ENCODE measurements at regions of chr1 and their contacts with region 1.

Region 1: DNA sequence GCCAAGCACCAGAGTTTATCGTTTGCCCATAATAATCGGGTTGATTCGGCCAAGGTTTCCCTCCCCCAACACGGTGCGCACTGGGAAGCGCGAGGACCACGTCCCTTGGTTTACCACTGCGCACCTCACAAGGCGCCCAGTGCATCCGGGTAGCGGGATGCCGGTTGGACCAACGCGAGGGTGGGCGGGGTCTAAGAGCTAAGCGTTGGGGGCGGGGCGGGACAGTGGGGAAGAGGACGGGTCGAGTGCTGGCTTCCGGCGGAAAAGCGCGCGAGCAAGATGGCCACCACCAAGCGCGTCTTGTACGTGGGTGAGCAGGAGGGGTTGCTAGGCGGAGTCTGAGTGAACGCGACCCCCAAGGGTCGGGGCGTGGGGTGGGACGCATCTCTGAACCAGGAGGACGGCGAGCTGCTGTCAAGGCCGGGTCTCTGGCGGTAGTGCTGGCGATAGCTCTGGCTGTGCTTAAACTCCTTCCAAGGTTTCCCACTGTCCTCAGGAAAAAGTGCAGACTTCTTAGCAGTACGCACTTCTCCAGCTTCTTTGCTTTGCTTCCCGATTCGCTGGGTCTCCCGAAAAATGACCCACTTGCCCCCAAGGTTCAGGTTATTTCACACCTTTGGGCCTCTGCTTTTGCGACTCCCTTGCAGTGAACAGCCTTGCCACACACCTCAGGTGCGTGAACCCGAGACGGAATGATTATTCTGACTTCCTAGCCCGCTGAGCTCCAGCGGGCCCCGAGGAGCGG is at the start of gene PPIE:
- DNase-seq: peak; percentile 82 to 89 (median 86)
- H3K4me3 ChIP-seq: peak within 1 kb of the TSS; percentile 56 to 98 (median 89)
- H3K4me3 Mint-ChIP-seq: peak within 1 kb of the TSS; percentile 95 to 98
- H3K27ac ChIP-seq: peak within 1 kb of the TSS; percentile 47 to 87
- H3K27ac Mint-ChIP-seq: peak within 1 kb of the TSS; percentile 85 to 95 (median 91)
- H3K4me1 ChIP-seq: peaks cover 11 to 15% of the 10 kb centered on the region in 2 donors
- H3K4me1 Mint-ChIP-seq: peaks cover 13% of the 10 kb centered on the region
- H3K27me3 ChIP-seq: peaks cover 0 to 7% of the 10 kb centered on the region in 2 donors
- H3K27me3 Mint-ChIP-seq: peaks cover 10 to 19% (median 16%) of the 10 kb centered on the region in 3 donors
- CTCF ChIP-seq: no peak
- polyA plus RNA-seq, gene PPIE: 48.8 to 55.9 (median 48.9) TPM

Region 2: DNA sequence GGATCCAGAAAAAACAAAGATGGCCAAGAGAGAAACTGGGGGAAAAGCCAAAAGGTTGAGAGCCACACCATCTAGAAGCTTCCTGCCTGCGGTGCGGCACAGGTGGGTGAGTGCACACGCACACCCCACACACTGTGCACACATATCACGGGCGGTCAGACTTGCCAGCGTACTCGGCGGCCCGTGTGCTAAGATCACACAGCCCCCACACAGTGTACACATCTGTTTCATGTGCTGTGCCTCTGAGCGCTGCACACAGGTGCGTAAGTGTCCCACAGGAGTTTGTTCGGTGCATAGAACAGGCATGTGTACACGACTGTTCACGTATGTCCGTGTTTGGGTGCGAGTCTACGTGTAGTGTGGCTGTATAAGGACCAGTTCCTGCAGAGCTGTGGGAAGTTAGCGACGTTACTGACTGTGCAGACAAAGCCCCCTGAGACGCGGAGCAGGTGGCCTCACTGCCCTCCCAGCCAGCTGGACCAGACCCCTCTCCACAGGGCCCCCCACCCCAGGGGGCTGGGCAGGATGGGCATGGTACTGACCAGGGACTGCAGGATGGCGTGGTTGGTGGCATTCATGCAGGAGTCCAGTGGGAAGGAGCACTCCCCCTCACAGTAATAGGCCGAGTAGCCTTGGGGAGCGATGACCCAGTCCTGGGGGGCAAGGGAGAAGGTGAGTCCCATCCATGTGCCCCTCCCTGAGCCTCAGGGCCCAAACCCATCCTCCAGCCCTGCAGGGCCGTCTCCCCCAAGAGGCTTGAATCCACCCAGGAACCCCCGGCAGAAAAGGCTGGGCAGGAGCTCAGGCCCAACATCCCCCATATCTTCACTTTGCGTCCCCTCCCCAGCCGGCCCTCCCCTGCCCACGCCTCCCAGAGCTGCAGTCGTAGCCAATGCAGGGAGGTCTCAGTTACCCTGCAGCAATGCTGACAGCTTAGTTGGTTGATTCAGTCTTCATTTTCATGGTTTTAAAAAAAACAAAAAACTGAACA is 24.1 kb after region 1 on chr1:
- intact Hi-C with region 1: no loop called
- DNase-seq: no peak
- H3K4me3 ChIP-seq: no peak overlapping the region
- H3K4me3 Mint-ChIP-seq: no peak overlapping the region
- H3K27ac ChIP-seq: no peak overlapping the region
- H3K27ac Mint-ChIP-seq: peak overlapping the region in 1 of 7 donors; percentile 64
- H3K4me1 ChIP-seq: no peaks in the 10 kb centered on the region
- H3K4me1 Mint-ChIP-seq: no peaks in the 10 kb centered on the region
- H3K27me3 ChIP-seq: no peaks in the 10 kb centered on the region
- H3K27me3 Mint-ChIP-seq: peaks cover 0 to 2% (median 0%) of the 10 kb centered on the region in 3 donors
- CTCF ChIP-seq: no peak

Region 3: GRCh38 chr1:39788758-39789570 is 50.2 kb after region 1 on chr1 and contains the start of gene BMP8B:
- intact Hi-C with region 1: loop called in 1 of 2 experiments (anchors 10 kb)
- DNase-seq: peak; percentile 53 to 67 (median 64)
- H3K4me3 ChIP-seq: peak within 1 kb of the TSS; percentile 59 to 80 (median 73)
- H3K4me3 Mint-ChIP-seq: peak within 1 kb of the TSS; percentile 84 to 95
- H3K27ac ChIP-seq: peak within 1 kb of the TSS in 1 of 2 donors; percentile 74
- H3K27ac Mint-ChIP-seq: peak within 1 kb of the TSS in 6 of 7 donors; percentile 63 to 88 (median 76)
- H3K4me1 ChIP-seq: peaks cover 25 to 36% of the 10 kb centered on the region in 2 donors
- H3K4me1 Mint-ChIP-seq: peaks cover 43% of the 10 kb centered on the region
- H3K27me3 ChIP-seq: peaks cover 0 to 6% of the 10 kb centered on the region in 2 donors
- H3K27me3 Mint-ChIP-seq: peaks cover 9 to 14% (median 12%) of the 10 kb centered on the region in 3 donors
- CTCF ChIP-seq: no peak
- polyA plus RNA-seq, gene BMP8B: 0.14 to 1.3 (median 0.24) TPM

Measured in CD14-positive monocyte (primary cell).